Heart right ventricle (tissue), 16 donors: ENCODE measurements at regions of chr10 and their contacts with region 1.

Region 1: DNA sequence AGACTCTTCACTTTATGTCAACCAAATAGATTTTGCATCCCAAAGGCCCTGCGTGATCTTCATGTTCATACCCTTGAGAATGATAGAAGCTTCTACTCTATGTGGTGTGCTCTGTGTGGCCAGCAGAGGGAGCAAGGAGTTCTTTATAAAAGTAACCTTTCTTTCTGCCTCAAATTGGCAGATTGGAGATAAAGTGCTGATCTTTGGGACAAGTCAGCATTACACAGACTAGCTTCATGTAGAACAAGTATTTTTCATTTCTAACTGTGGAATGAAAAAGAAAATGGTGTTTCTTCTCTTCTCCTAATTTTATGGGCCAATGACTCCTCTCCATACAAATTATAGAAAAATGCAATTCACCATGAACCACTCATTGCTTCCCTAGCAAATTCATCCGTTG is 1214.1 kb downstream of the SORCS1 start:
- DNase-seq: peak in 1 of 2 donors; percentile 39
- ATAC-seq: peak in 2 of 8 donors; percentile 20 to 53
- H3K4me3 ChIP-seq: no peak overlapping the region
- H3K27ac ChIP-seq: no peak overlapping the region
- H3K4me1 ChIP-seq: peaks cover 0 to 4% (median 0%) of the 10 kb centered on the region in 9 donors
- H3K27me3 ChIP-seq: no peaks in the 10 kb centered on the region
- CTCF ChIP-seq: peak; percentile 36 to 83 (median 76)

Region 2: GRCh38 chr10:106175760-106176377 is 225.5 kb after region 1 on chr10:
- intact Hi-C with region 1: loop called in 8 of 10 experiments (anchors 2 to 10 kb)
- DNase-seq: no peak
- ATAC-seq: no peak
- H3K4me3 ChIP-seq: no peak overlapping the region
- H3K27ac ChIP-seq: no peak overlapping the region
- H3K4me1 ChIP-seq: no peaks in the 10 kb centered on the region
- H3K27me3 ChIP-seq: no peaks in the 10 kb centered on the region
- CTCF ChIP-seq: peak in 8 of 9 donors; percentile 10 to 60 (median 50)

Region 3: DNA sequence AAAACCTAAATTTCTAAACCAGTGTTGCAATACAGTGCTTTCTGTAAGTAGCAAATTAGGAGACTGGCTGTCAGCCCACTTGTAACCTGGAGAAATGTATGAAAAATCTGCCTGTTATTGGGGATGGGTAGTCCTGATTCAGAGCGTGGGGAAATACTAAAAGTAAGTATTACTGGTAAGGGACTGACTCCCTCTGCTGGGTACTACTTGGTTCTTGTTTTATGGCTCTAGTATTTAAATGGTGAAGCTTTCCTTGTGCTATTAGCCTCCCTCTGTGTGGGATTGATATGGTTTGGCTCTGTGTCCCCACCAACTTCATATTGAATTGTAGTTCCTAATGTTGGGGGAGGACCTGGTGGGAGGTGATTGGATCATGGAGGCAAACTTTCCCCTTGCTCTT is 328.0 kb after region 1 on chr10:
- intact Hi-C with region 1: loop called in 2 of 10 experiments (anchors 5 kb)
- DNase-seq: no peak
- ATAC-seq: peak in 3 of 8 donors; percentile 38 to 41 (median 39)
- H3K4me3 ChIP-seq: no peak overlapping the region
- H3K27ac ChIP-seq: no peak overlapping the region
- H3K4me1 ChIP-seq: no peaks in the 10 kb centered on the region
- H3K27me3 ChIP-seq: peaks cover 0 to 7% (median 0%) of the 10 kb centered on the region in 7 donors
- CTCF ChIP-seq: peak in 3 of 9 donors; percentile 23 to 44 (median 39)

Region 4: DNA sequence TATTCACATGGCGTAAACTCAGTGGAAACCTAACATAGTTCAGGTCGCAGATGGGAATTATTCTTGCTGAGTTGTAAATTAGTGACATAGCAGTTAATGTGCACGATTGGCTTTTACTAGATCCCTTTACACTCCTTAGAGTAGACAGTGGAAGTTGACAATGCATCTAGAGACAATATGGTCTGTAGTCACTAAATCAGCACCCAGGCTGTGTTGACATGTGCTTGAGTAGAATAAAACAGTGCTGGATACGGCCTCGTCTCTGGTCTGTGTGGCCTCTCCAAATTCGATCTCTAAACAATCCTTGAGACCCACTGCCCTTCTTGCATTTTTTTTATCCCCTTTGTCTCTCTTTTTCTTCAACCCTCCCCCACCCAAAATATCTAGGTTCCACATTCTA is 598.4 kb after region 1 on chr10:
- intact Hi-C with region 1: no loop called
- DNase-seq: no peak
- ATAC-seq: no peak
- H3K4me3 ChIP-seq: no peak overlapping the region
- H3K27ac ChIP-seq: no peak overlapping the region
- H3K4me1 ChIP-seq: no peaks in the 10 kb centered on the region
- H3K27me3 ChIP-seq: no peaks in the 10 kb centered on the region
- CTCF ChIP-seq: no peak

Region 5: GRCh38 chr10:106571192-106571946 is 621.0 kb after region 1 on chr10:
- intact Hi-C with region 1: loop called in 1 of 10 experiments (anchors 10 kb)
- DNase-seq: no peak
- ATAC-seq: peak in 2 of 8 donors; percentile 39 to 45
- H3K4me3 ChIP-seq: no peak overlapping the region
- H3K27ac ChIP-seq: no peak overlapping the region
- H3K4me1 ChIP-seq: peaks cover 0 to 6% (median 0%) of the 10 kb centered on the region in 9 donors
- H3K27me3 ChIP-seq: no peaks in the 10 kb centered on the region
- CTCF ChIP-seq: peak in 8 of 9 donors; percentile 24 to 61 (median 50)